HEK293 (cell line): ENCODE measurements at regions of chr5 and their contacts with region 1.

Region 1: DNA sequence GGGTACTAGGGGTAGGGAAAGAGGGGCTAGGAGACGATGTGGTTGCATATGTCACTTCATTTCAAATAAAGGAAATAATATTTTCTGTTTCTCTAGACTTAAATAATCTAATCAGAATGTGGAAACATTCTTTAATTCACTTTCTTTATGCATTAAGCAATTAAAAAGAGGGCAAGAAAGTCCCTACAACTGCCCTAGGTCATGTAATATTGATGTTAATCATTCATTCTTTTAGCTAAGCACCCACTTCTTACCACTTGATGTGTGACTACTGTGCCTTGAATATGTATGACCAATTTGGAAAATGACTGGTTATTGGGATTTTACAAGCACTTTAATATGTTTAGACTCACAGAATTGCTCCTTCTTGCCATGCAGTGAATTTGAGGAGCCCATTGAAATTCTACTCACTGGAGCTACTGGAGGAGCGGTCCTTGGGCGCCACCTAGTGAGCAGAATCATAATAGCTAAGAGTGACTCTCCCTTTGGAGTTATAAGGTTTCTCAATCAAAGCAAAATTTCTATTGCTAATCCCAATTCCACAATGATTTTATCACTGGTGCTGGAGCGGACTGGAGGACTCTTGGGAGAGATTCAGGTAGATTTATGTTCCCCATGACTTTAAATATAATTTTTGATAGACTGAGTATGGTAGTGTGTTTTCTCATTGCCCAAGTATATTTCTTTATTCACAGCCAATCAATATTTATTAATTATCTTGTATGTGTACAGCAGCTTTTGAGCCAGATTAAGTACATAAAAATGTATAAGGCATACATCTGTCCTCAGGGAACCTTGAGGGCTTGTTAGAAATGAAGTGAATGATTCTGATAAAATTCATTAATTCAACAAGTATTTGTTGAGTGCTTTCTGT is 225.1 kb downstream of the ADGRV1 start:
- H3K4me3 ChIP-seq: no peak overlapping the region
- H3K27ac ChIP-seq: no peak overlapping the region
- H3K4me1 ChIP-seq: no peaks in the 10 kb centered on the region
- CTCF ChIP-seq: peak; percentile 66

Region 2: DNA sequence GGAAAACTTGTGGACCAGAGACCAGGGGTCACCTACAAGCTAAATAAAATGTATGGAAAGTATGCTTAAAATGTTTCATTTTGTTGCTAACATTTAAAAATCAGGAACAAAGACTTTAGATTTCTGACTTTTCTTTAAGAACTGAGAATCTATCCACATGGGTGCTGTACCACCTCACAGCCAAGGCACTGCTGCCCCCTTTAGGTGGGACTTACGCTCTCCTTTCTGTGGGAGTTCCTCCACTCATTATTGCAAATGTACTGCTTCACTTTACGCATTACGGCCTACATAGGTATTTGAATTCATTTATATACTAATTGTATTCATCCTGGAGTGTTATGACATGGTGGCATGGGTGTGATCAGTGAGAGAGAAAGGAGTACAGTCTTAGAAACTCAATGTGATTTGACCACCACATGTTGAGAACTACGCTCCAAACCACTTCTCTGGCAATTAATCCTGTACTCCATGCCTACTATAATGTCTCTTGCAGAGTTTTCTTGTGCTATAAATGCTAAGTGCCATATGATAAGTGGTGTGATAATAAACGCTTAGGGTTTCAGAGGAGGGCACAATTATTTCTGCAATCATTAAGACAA is 349.5 kb before region 1 on chr5:
- CTCF ChIA-PET with region 1: interaction called, 25 read pairs
- POLR2A ChIA-PET with region 1: no interaction called
- H3K4me3 ChIP-seq: no peak overlapping the region
- H3K27ac ChIP-seq: no peak overlapping the region
- H3K4me1 ChIP-seq: peaks cover 10% of the 10 kb centered on the region
- CTCF ChIP-seq: no peak

Region 3: GRCh38 chr5:90709323-90710155 is 74.2 kb before region 1 on chr5:
- CTCF ChIA-PET with region 1: interaction called, 53 read pairs
- POLR2A ChIA-PET with region 1: no interaction called
- H3K4me3 ChIP-seq: no peak overlapping the region
- H3K27ac ChIP-seq: no peak overlapping the region
- H3K4me1 ChIP-seq: no peaks in the 10 kb centered on the region
- CTCF ChIP-seq: 0 out of 2 replicates have a peak, but pooled peaks have one; percentile 17

Region 4: DNA sequence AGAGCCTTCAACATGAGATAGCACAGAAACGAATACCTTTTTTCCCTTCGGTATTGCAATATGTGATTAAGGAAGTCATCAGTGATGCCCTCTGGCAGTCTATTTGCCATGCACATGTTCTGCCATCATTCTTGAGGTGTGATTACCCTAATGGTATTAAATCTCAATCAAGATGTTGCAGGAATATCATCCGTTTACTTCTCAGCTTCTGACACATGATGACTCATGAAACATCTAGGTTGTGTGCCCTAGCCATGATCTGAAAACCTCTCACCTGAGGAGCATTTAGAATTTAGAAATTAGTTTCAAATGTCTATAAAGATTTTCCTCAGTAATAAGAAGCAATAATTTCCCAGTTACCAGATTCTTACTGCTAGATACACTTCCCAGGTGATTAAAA is 16.0 kb before region 1 on chr5:
- CTCF ChIA-PET with region 1: interaction called, 22 read pairs
- POLR2A ChIA-PET with region 1: no interaction called
- H3K4me3 ChIP-seq: no peak overlapping the region
- H3K27ac ChIP-seq: no peak overlapping the region
- H3K4me1 ChIP-seq: no peaks in the 10 kb centered on the region
- CTCF ChIP-seq: no peak